Transverse colon (tissue), 4 donors: ENCODE measurements at regions of chr11 and their contacts with region 1.

Region 1: DNA sequence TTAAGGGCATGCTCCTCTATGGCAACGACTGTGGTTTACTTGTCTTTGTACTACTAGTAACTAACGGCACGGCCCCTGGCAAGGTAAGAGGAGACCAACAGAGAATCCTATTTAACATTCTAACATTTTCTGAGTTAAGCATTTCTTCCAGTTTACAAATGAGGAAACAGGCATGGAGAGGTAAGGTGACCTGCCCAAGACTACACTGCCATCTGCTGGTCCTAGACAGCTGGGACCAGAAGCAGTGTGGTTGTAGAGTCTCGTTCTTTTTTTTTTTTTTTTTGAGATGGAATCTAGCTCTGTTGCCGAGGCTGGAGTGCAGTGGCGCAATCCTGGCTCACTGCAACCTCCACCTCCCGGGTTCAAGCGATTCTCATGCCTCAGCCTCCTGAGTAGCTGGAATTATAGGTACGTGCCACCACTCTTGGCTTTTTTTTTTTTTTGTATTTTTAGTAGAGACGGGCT is 5.3 kb upstream of the RAPSN start:
- DNase-seq: peak; percentile 77
- H3K4me3 ChIP-seq: no peak overlapping the region
- H3K27ac ChIP-seq: no peak overlapping the region
- H3K4me1 ChIP-seq: peaks cover 0 to 3% (median 0%) of the 10 kb centered on the region in 4 donors
- H3K27me3 ChIP-seq: no peaks in the 10 kb centered on the region
- CTCF ChIP-seq: peak; percentile 62 to 74 (median 69)
- EP300 ChIP-seq: no peak
- POLR2A ChIP-seq: no peak

Region 2: DNA sequence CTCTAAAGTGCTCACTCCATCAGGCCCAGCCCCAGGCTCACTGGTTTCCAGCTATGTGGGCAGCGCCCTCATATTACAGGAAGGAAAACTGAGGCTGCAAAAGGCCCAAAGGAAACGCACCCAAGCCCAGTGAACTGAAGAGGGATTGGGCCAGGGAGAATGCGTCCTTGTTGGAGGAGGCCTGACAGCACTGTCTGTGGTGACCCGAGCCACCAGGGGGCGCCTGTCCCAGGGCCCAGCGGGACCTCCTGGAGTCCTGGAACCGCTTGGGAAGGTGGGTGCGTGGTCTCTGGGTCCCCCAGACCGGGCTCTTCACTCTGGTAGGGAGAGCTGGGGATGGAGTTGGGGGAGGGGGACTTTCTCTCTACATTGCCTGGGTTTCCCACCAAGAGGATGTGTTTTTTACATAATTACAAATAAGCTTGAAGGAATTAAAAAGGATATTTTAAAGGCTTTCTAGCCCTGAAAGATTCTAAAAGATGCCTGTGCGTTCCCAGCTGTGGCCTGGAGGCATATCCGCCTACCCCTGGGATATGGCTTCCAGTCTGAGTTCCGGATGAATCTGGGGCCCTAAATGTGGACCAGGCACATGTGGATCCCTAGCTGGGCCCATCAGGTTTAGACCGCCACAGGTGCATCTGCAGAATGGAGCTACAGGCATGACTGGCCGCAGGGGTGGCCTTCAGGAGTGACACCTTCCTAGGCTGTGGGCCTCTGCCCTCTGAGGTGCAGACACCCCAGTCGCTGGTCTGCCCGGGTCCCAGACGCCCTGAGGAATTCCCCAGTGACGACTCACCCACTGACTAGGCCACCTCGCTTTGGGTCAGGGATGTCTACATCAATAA is 80.1 kb before region 1 on chr11:
- in situ Hi-C with region 1: no loop called
- intact Hi-C with region 1: loop called (anchors 5 kb)
- DNase-seq: peak; percentile 85
- H3K4me3 ChIP-seq: no peak overlapping the region
- H3K27ac ChIP-seq: no peak overlapping the region
- H3K4me1 ChIP-seq: no peaks in the 10 kb centered on the region
- H3K27me3 ChIP-seq: no peaks in the 10 kb centered on the region
- CTCF ChIP-seq: peak; percentile 91 to 96 (median 94)
- EP300 ChIP-seq: no peak
- POLR2A ChIP-seq: no peak

Region 3: DNA sequence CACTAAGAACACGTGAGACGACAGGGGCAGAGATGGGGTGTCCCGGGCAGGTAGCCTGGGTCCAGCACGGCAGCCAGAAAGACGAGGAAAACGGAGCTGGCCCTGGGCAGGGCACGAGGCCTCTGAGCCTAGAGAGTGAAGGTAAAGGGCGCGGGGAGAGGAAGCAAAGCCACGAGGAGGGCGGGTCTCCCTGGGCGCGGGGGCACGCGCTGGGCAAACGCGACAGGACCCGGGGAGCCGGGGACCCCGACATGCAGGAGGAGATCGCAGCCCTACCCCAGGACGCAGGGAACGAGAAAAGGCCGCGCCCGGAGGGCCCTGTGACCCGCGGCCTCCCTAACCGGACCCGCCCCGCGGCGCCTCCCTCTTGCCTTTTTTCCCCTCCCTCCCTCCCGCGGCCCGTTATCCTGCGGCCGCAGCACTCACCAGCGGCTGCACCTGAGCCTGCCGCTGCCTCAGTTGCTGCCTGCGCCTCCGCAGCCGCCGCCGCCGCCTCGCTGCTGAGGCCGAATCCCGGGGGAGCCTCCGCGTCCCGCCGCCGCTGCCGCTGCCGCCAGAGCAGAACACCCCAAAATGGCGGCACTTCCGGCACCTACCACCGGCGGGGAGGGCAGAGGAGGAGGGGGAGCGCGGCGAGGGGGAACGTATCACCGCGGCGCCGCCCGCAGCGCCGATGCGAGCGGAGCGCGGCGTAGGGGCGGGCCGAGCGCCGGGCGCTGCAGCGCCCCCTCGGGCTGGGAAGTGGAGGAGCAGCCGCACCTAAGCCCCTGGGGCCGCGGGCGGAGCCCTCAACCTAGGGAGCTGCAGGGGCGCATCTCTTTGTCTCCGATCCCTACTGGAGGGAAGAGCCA is 98.6 kb after region 1 on chr11 and contains the start of gene CELF1:
- in situ Hi-C with region 1: loop called in 1 of 4 experiments (anchors 25 kb)
- intact Hi-C with region 1: no loop called
- DNase-seq: peak; percentile 93
- H3K4me3 ChIP-seq: peak within 1 kb of the TSS; percentile 77 to 95 (median 94)
- H3K27ac ChIP-seq: peak within 1 kb of the TSS; percentile 94 to 97 (median 96)
- H3K4me1 ChIP-seq: peaks cover 11 to 48% (median 22%) of the 10 kb centered on the region in 4 donors
- H3K27me3 ChIP-seq: no peaks in the 10 kb centered on the region
- CTCF ChIP-seq: peak; percentile 68 to 96 (median 85)
- EP300 ChIP-seq: no peak
- POLR2A ChIP-seq: peak; percentile 46
- total RNA-seq, gene CELF1: 82.9 to 248 (median 96.7) TPM